ENCODE measurements at regions of chr14 and their contacts with region 1.

Region 1: GRCh38 chr14:91482263-91483013 is 27.7 kb downstream of the PPP4R3A start:
- DNase-seq: no peak
- ATAC-seq: no peak
- H3K4me3 ChIP-seq: no peak overlapping the region
- H3K4me3 Mint-ChIP-seq: no peak overlapping the region
- H3K27ac ChIP-seq: no peak overlapping the region
- H3K27ac Mint-ChIP-seq: peak overlapping the region; percentile 69
- H3K4me1 ChIP-seq: peaks cover 6% of the 10 kb centered on the region
- H3K4me1 Mint-ChIP-seq: peaks cover 84% of the 10 kb centered on the region
- H3K27me3 ChIP-seq: no peaks in the 10 kb centered on the region
- H3K27me3 Mint-ChIP-seq: no peaks in the 10 kb centered on the region
- CTCF ChIP-seq: no peak

Region 2: DNA sequence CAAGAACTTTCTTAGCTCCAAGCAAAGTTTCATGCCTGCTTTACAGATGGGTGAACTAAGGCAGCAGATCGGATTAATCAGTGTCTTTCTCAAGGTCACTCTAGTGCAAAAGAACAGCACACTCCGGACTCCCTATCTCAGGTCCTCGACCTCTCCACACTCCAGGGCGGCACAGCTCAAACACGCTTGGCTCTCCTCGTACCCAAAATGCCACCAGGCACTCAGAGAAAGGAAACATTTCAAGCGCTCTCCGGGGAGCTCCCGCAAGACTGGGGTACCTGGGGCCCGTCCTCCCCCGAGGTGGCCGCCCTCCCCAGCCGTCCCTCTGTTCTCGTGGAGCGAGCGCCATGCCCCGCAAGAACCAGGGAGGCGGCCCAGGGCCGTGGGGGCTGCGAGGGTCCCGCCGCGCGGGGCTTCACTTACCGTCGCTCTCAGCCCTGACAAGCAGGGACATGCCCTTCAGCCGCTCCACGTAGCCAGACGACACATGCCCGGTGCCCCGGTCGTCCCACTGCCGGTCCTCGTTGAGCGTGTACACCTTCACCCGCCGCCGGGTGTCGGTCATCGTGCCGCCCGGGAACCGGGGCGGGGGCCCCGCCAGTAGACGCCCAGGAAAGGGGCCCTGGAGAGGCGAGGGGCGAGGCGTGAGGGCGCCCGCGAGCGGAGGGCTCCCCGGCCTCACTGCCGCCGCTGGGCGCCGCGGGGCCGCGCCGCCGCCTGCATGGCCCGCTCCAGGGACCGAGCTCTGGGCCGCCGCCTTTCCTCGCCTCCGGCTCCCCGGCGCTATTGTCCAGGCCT is 26.8 kb after region 1 on chr14:
- CTCF ChIA-PET with region 1: no interaction called
- POLR2A ChIA-PET with region 1: no interaction called
- intact Hi-C with region 1: no loop called
- DNase-seq: peak in 12 of 14 experiments; percentile 13 to 51 (median 30)
- ATAC-seq: peak; percentile 1
- H3K4me3 ChIP-seq: peak overlapping the region; percentile 90
- H3K4me3 Mint-ChIP-seq: peak overlapping the region; percentile 100
- H3K27ac ChIP-seq: peak overlapping the region; percentile 65 to 99
- H3K27ac Mint-ChIP-seq: peak overlapping the region; percentile 100
- H3K4me1 ChIP-seq: peaks cover 33% of the 10 kb centered on the region
- H3K4me1 Mint-ChIP-seq: peaks cover 55% of the 10 kb centered on the region
- H3K27me3 ChIP-seq: no peaks in the 10 kb centered on the region
- H3K27me3 Mint-ChIP-seq: no peaks in the 10 kb centered on the region
- CTCF ChIP-seq: no peak

Region 3: DNA sequence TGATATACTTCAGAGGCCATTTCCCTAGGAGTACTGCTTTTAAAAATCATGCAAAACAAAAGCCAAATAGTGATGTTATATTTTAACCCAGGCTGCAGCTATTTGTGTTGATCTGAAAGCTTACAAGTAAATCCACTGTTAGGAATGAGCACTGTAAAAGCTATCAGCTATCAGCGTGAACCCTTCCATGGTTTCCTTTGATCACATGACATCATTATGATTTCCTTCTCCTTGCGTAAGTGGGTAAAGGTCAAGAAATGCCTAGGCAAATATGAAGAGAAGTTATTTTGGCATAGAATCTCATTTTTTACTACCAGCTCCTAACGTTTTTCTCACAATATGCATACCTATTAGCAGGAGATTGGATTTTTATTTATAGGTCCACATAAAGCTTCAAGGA is 298.0 kb after region 1 on chr14:
- CTCF ChIA-PET with region 1: no interaction called
- POLR2A ChIA-PET with region 1: no interaction called
- intact Hi-C with region 1: loop called in 1 of 2 experiments (anchors 10 kb)
- DNase-seq: no peak
- ATAC-seq: no peak
- H3K4me3 ChIP-seq: no peak overlapping the region
- H3K4me3 Mint-ChIP-seq: no peak overlapping the region
- H3K27ac ChIP-seq: no peak overlapping the region
- H3K27ac Mint-ChIP-seq: no peak overlapping the region
- H3K4me1 ChIP-seq: no peaks in the 10 kb centered on the region
- H3K4me1 Mint-ChIP-seq: no peaks in the 10 kb centered on the region
- H3K27me3 ChIP-seq: no peaks in the 10 kb centered on the region
- H3K27me3 Mint-ChIP-seq: no peaks in the 10 kb centered on the region
- CTCF ChIP-seq: no peak

Measured in CD4-positive, alpha-beta T cell (primary cell).